ENCODE measurements at regions of chr15 and their contacts with region 1.

Region 1: DNA sequence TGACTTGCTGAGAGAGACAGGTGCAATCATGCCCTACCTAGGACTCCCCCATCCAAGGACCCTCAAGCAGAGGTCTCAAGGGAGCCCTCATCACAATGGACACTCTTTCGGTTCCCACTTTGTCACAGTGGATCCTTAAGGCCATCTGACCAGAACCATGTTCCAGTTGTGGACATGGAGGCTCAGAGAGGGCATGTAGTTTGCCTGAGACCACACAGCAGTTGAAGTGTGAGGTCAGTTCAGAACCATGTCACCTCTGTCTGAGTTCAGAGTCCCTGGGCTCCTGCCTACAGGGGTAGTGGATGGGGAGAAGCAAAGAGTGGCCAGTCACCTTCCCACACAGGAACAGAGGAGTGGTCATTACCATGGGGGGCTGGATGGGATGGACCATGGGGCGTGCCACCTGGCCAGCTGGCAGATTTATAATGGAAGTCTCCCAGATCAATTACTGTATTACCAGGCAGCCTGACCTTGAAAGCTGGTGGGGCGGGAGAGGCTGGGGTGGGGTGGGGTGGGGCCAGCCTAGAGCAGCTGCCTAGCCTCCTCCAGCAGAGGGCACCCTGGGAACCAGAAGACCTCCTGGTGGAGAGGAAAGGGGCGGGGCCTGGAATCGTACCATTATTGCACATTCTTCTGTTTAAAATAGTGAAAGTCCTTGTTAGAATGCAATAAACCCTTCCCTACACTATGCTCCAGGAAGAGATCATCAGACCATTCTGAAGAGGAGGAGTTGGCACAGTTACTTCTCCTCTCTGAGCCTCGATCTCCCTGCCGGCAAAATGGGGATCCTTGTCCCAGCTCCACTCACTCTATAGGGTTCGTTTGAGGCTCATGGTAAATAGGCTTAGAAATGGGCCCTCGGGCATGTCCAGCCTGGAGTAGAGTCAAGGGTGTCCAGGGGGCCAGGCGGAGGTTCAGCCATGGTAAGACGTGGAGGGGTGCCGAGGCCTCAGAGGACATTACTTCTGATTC is 26.9 kb upstream of the LINGO1 start:
- DNase-seq: peak; percentile 84
- H3K4me3 Mint-ChIP-seq: no peak overlapping the region
- H3K27ac Mint-ChIP-seq: no peak overlapping the region
- H3K4me1 Mint-ChIP-seq: no peaks in the 10 kb centered on the region
- H3K27me3 Mint-ChIP-seq: peaks cover 75% of the 10 kb centered on the region
- CTCF ChIP-seq: peak; percentile 68

Region 2: GRCh38 chr15:77807115-77807514 is 147.5 kb after region 1 on chr15:
- CTCF ChIA-PET with region 1: no interaction called
- intact Hi-C with region 1: no loop called
- DNase-seq: no peak
- H3K4me3 Mint-ChIP-seq: no peak overlapping the region
- H3K27ac Mint-ChIP-seq: no peak overlapping the region
- H3K4me1 Mint-ChIP-seq: no peaks in the 10 kb centered on the region
- H3K27me3 Mint-ChIP-seq: peaks cover 88% of the 10 kb centered on the region
- CTCF ChIP-seq: no peak

Region 3: DNA sequence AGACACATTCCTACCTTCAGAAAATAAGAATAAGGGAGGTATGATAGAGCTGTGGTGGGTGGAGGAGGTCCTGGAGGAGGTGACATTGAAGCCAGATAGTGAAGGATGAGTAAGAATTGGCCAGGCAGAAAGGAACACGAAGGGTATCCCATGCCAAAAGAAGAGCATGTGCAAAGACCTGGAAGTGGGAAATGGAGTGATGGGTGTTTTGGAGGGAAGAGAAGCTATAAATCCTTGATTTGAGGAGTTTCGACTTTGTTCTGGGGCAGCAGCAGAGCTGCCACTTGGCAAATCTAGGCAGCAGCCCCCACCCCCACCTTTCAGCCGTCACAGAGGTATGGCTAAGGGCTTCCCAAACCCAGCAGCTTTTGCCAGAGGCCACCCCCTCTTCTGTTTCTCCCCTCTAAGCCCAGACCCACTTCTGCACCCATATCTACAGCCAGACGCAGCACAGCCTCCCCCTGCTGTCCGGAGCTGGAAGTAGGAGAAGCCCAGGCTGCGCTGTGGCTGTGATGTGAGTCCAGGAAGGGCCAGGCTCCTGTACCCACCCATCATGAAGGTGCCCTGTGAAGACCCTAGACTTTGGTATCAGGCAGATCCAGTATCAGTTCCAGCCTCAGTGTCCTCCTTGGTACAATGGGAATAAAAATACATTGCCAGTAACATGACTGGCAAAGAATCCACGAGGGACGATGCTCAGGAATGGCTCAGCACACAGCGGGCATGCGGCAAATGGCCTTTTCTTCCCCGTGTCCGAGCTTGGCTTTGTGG is 161.7 kb after region 1 on chr15:
- CTCF ChIA-PET with region 1: interaction called, 14 read pairs
- intact Hi-C with region 1: loop called (anchors 5 kb)
- DNase-seq: peak; percentile 82
- H3K4me3 Mint-ChIP-seq: no peak overlapping the region
- H3K27ac Mint-ChIP-seq: no peak overlapping the region
- H3K4me1 Mint-ChIP-seq: no peaks in the 10 kb centered on the region
- H3K27me3 Mint-ChIP-seq: peaks cover 83% of the 10 kb centered on the region
- CTCF ChIP-seq: peak; percentile 71

Measured in Calu3 (cell line).